IMR-90 (cell line): ENCODE measurements at regions of chr20 and their contacts with region 1.

Region 1: DNA sequence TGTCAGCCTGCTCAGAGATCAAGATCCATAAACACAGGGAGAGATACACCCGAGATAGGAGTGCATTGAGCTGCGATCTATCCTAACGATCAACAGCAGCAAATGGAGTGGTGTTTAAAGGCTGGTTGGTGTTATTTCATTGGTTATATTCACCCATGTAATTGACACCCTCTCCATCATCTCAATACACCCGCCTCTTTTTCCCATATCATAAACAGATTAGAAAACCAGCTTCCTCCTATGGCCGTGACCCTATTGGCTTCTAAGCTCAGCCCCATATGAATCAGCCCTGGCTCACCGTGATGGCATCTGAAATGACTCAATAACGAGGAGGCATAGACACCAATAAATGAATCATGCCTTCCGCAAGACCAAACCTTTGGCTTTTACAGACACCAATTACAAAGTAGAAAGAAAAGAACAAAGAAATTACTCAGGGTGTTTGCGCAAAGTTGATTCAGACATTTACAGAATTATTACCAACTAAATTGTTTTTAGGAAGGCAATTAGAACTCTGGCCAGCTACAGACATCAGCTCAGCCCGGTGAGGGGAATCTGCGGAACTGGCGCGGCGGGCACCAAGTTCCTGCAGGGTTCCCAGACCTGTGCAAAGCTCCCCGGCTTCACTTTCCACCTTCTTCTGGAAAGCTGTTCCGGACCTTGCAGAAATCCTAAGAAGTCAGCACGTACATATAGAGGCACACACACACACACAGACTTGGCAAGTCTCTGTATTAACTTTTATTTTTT is 11.5 kb downstream of the PMEPA1 start:
- DNase-seq: peak; percentile 98
- ATAC-seq: peak; percentile 95
- H3K4me3 ChIP-seq: peak overlapping the region; percentile 5; the same call in 1 of the 2 replicates
- H3K27ac ChIP-seq: peak overlapping the region; percentile 64
- H3K4me1 ChIP-seq: peaks cover 17% of the 10 kb centered on the region
- H3K27me3 ChIP-seq: no peaks in the 10 kb centered on the region
- CTCF ChIP-seq: no peak
- POLR2A ChIP-seq: peak; percentile 14; the same call in 1 of the 2 replicates
- RAD21 ChIP-seq: no peak

Region 2: GRCh38 chr20:57709931-57710799 is 11.9 kb after region 1 on chr20 and contains the start of gene PMEPA1:
- CTCF ChIA-PET with region 1: no interaction called
- POLR2A ChIA-PET with region 1: interaction called, 4 read pairs
- dilution Hi-C with region 1: no loop called
- in situ Hi-C with region 1: no loop called
- intact Hi-C with region 1: loop called (anchors 1 kb)
- DNase-seq: peak; percentile 95
- ATAC-seq: peak; percentile 92
- H3K4me3 ChIP-seq: peak within 1 kb of the TSS; percentile 76
- H3K27ac ChIP-seq: peak within 1 kb of the TSS; percentile 77
- H3K4me1 ChIP-seq: peaks cover 11% of the 10 kb centered on the region
- H3K27me3 ChIP-seq: no peaks in the 10 kb centered on the region
- CTCF ChIP-seq: no peak
- POLR2A ChIP-seq: peak; percentile 77
- RAD21 ChIP-seq: no peak
- total RNA-seq, gene PMEPA1: 1.4 and 2.0 TPM in 2 replicates

Region 3: GRCh38 chr20:57760698-57761415 is 62.6 kb after region 1 on chr20:
- CTCF ChIA-PET with region 1: interaction called, 11 read pairs
- POLR2A ChIA-PET with region 1: no interaction called
- dilution Hi-C with region 1: no loop called
- in situ Hi-C with region 1: no loop called
- intact Hi-C with region 1: no loop called
- DNase-seq: no peak
- ATAC-seq: no peak
- H3K4me3 ChIP-seq: no peak overlapping the region
- H3K27ac ChIP-seq: no peak overlapping the region
- H3K4me1 ChIP-seq: no peaks in the 10 kb centered on the region
- H3K27me3 ChIP-seq: peaks cover 8% of the 10 kb centered on the region
- CTCF ChIP-seq: no peak
- POLR2A ChIP-seq: no peak
- RAD21 ChIP-seq: no peak